Dorsolateral prefrontal cortex (tissue), 120 donors: ENCODE measurements at regions of chr19 and their contacts with region 1.

Region 1: GRCh38 chr19:6501740-6502648 is at the start of gene TUBB4A:
- DNase-seq: peak; percentile 81 to 94 (median 88)
- H3K4me3 ChIP-seq: peak within 1 kb of the TSS; percentile 52 to 98 (median 88)
- H3K27ac ChIP-seq: peak within 1 kb of the TSS; percentile 58 to 99 (median 98)
- H3K27me3 ChIP-seq: peaks cover 0 to 4% (median 0%) of the 10 kb centered on the region in 45 donors
- CTCF ChIP-seq: peak in 7 of 56 donors; percentile 13 to 36 (median 15)
- total RNA-seq, gene TUBB4A: 306 to 1,743 (median 779) TPM

Region 2: GRCh38 chr19:6378041-6378440 is 124.0 kb before region 1 on chr19:
- intact Hi-C with region 1: loop called in 1 of 2 experiments (anchors 5 kb)
- DNase-seq: peak in 1 of 10 donors; percentile 37
- H3K4me3 ChIP-seq: no peak overlapping the region
- H3K27ac ChIP-seq: peak overlapping the region in 12 of 59 donors; percentile 2 to 94 (median 18)
- H3K27me3 ChIP-seq: no peaks in the 10 kb centered on the region
- CTCF ChIP-seq: no peak

Region 3: GRCh38 chr19:6417713-6418561 is 84.1 kb before region 1 on chr19:
- intact Hi-C with region 1: loop called in 1 of 2 experiments (anchors 5 kb)
- DNase-seq: peak in 8 of 10 donors; percentile 52 to 83 (median 62)
- H3K4me3 ChIP-seq: peak overlapping the region in 1 of 59 donors; percentile 1
- H3K27ac ChIP-seq: peak overlapping the region in 49 of 59 donors; percentile 1 to 78 (median 57)
- H3K27me3 ChIP-seq: no peaks in the 10 kb centered on the region
- CTCF ChIP-seq: peak in 54 of 56 donors; percentile 17 to 76 (median 59)

Region 4: GRCh38 chr19:6424939-6425731 is 76.9 kb before region 1 on chr19:
- intact Hi-C with region 1: loop called in 1 of 2 experiments (anchors 5 kb)
- DNase-seq: peak; percentile 97 to 100 (median 100)
- H3K4me3 ChIP-seq: peak overlapping the region in 58 of 59 donors; percentile 2 to 92 (median 56)
- H3K27ac ChIP-seq: peak overlapping the region; percentile 18 to 96 (median 88)
- H3K27me3 ChIP-seq: no peaks in the 10 kb centered on the region
- CTCF ChIP-seq: peak in 22 of 56 donors; percentile 2 to 38 (median 18)

Region 5: DNA sequence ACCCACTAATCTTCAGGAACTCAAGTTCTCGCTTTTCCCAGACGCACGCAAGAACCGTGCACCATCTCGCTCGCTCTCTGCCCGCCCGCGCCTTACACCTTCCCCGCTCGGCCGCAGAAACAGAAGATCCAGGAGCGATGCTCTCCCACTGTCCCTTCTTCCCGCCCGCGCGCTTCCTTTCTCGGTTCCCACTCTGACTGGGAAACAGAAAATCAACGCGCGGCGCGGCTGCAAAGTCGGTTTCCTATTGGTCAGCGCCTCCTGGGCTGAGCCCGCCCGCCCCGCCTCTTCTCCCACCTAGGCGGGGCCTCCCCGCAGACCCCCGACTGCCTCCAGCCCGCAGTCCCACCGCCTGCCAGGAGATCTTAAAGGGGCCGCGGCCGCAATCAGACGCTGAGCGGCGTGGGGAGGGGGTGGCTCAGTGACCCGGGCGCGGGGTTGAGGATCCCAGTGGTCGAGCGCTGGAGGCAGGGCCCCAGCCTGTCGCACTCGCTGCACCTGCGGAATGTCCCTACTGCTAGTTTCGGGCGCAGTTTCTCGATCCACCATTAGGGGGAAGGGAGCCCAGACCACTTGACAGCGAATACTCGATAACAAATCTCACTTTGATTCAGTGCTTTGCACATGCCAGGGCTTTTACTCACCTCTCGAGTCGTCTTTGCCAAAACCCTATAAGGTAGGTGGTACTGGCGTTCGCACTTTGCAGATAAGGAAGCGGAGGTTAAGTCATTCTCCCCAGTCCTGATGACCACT is 41.7 kb before region 1 on chr19:
- intact Hi-C with region 1: loop called in 1 of 2 experiments (anchors 5 kb)
- DNase-seq: peak; percentile 98 to 100 (median 99)
- H3K4me3 ChIP-seq: peak overlapping the region; percentile 52 to 98 (median 86)
- H3K27ac ChIP-seq: peak overlapping the region; percentile 9 to 92 (median 83)
- H3K27me3 ChIP-seq: peaks cover 0 to 27% (median 13%) of the 10 kb centered on the region in 45 donors
- CTCF ChIP-seq: peak in 54 of 56 donors; percentile 7 to 75 (median 52)

Region 6: DNA sequence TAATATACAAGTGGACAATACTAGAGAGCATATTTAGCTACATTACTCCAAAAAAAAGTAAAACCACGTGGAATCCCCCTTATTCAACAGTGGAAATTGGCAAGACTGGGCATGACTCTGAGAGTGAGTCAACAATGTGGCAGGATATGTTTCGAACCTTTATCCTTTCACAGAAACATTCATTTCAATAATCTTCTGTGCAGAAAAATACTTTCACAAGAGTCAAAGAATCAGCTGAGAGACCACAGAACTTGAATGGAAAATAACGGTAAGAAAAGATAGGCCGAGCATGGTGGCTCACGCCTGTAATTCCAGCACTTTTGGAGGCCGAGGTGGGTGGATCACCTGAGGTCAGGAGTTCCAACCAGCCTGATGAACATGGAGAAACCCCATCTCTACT is 114.0 kb after region 1 on chr19:
- intact Hi-C with region 1: no loop called
- DNase-seq: no peak
- H3K4me3 ChIP-seq: no peak overlapping the region
- H3K27ac ChIP-seq: no peak overlapping the region
- H3K27me3 ChIP-seq: peaks cover 0 to 22% (median 3%) of the 10 kb centered on the region in 45 donors
- CTCF ChIP-seq: no peak